ENCODE measurements at regions of chr17 and their contacts with region 1.

Region 1: GRCh38 chr17:44044067-44044466 is 22.4 kb downstream of the LSM12 start:
- DNase-seq: no peak
- ATAC-seq: no peak
- H3K4me3 ChIP-seq: no peak overlapping the region
- H3K27ac ChIP-seq: peak overlapping the region in 5 of 10 donors; percentile 46 to 71 (median 53)
- H3K4me1 ChIP-seq: peaks cover 2 to 50% (median 34%) of the 10 kb centered on the region in 9 donors
- H3K27me3 ChIP-seq: no peaks in the 10 kb centered on the region
- CTCF ChIP-seq: no peak

Region 2: DNA sequence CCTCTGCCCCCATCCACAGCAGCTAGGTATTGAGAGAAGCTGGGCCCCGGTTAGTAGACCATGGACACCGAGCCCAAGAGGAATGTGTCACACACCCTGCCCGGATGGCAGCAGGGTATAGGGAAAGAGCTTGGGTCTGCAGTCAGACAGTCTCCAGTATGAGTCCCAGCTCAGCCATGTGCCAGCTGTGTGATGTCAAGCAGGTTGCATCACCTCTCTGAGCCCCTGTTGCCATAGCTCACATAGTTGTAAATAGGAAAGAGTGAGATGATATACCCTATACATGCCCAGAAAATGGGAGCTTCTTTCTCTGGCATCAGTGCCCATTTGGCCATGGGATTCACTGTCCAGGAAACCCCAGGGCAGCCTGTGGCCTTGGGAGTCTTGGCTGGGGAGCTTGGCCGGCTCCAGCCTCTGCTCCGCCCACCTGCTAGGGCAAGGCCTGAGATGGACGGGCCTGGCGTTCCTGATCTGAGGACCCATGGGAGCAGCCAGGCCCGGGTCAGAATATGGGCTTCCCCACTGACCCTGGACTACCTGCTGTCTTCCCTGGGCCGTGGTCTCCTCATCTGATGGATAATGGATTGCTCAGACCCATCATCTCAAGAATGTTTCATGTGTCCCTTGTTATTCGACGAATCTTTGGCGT is 183.9 kb before region 1 on chr17:
- intact Hi-C with region 1: no loop called
- DNase-seq: no peak
- ATAC-seq: no peak
- H3K4me3 ChIP-seq: no peak overlapping the region
- H3K27ac ChIP-seq: peak overlapping the region; percentile 51 to 90 (median 80)
- H3K4me1 ChIP-seq: peaks cover 12 to 65% (median 40%) of the 10 kb centered on the region in 9 donors
- H3K27me3 ChIP-seq: no peaks in the 10 kb centered on the region
- CTCF ChIP-seq: no peak

Region 3: GRCh38 chr17:43907425-43907981 is 136.6 kb before region 1 on chr17 and contains the start of gene MPP2:
- intact Hi-C with region 1: no loop called
- DNase-seq: peak; percentile 69 to 72
- ATAC-seq: peak; percentile 64 to 87 (median 84)
- H3K4me3 ChIP-seq: peak within 1 kb of the TSS; percentile 61 to 95 (median 83)
- H3K27ac ChIP-seq: peak within 1 kb of the TSS in 9 of 10 donors; percentile 38 to 89 (median 83)
- H3K4me1 ChIP-seq: peaks cover 3 to 41% (median 24%) of the 10 kb centered on the region in 9 donors
- H3K27me3 ChIP-seq: peaks cover 0 to 52% (median 0%) of the 10 kb centered on the region in 7 donors
- CTCF ChIP-seq: peak in 7 of 9 donors; percentile 10 to 57 (median 36)
- total RNA-seq, gene MPP2: 9.1 to 20.7 (median 14.1) TPM

Region 4: GRCh38 chr17:43946069-43946696 is 97.9 kb before region 1 on chr17:
- intact Hi-C with region 1: loop called in 7 of 10 experiments (anchors 1 to 10 kb)
- DNase-seq: no peak
- ATAC-seq: no peak
- H3K4me3 ChIP-seq: no peak overlapping the region
- H3K27ac ChIP-seq: no peak overlapping the region
- H3K4me1 ChIP-seq: peaks cover 0 to 5% (median 0%) of the 10 kb centered on the region in 9 donors
- H3K27me3 ChIP-seq: peaks cover 6 to 46% (median 35%) of the 10 kb centered on the region in 7 donors
- CTCF ChIP-seq: no peak

Region 5: GRCh38 chr17:44006598-44007345 is 37.3 kb before region 1 on chr17:
- intact Hi-C with region 1: loop called in 4 of 10 experiments (anchors 5 kb)
- DNase-seq: peak; percentile 97 to 99
- ATAC-seq: peak; percentile 89 to 96 (median 93)
- H3K4me3 ChIP-seq: peak overlapping the region; percentile 27 to 77 (median 64)
- H3K27ac ChIP-seq: peak overlapping the region in 6 of 10 donors; percentile 18 to 75 (median 39)
- H3K4me1 ChIP-seq: peaks cover 18 to 55% (median 41%) of the 10 kb centered on the region in 9 donors
- H3K27me3 ChIP-seq: peaks cover 14 to 43% (median 25%) of the 10 kb centered on the region in 7 donors
- CTCF ChIP-seq: peak; percentile 32 to 70 (median 56)

Measured in heart right ventricle (tissue), 16 donors.